ENCODE measurements at regions of chr16 and their contacts with region 1.

Region 1: GRCh38 chr16:29848420-29849297 is 14.4 kb downstream of the CDIPT start:
- DNase-seq: peak; percentile 61 to 78 (median 75)
- H3K4me3 ChIP-seq: no peak overlapping the region
- H3K27ac ChIP-seq: no peak overlapping the region
- H3K4me1 ChIP-seq: no peaks in the 10 kb centered on the region
- H3K27me3 ChIP-seq: no peaks in the 10 kb centered on the region

Region 2: GRCh38 chr16:29694384-29695195 is 154.1 kb before region 1 on chr16:
- CTCF ChIA-PET with region 1: interaction called, 11 read pairs
- POLR2A ChIA-PET with region 1: no interaction called
- DNase-seq: no peak
- H3K4me3 ChIP-seq: no peak overlapping the region
- H3K27ac ChIP-seq: no peak overlapping the region
- H3K4me1 ChIP-seq: peaks cover 0 to 9% (median 7%) of the 10 kb centered on the region in 4 experiments
- H3K27me3 ChIP-seq: no peaks in the 10 kb centered on the region

Region 3: GRCh38 chr16:29805378-29806098 is 43.1 kb before region 1 on chr16:
- CTCF ChIA-PET with region 1: interaction called, 17 read pairs
- POLR2A ChIA-PET with region 1: no interaction called
- DNase-seq: peak; percentile 98 to 100 (median 99)
- H3K4me3 ChIP-seq: peak overlapping the region; percentile 62 to 94 (median 79)
- H3K27ac ChIP-seq: peak overlapping the region; percentile 83 to 94
- H3K4me1 ChIP-seq: peaks cover 8 to 52% (median 42%) of the 10 kb centered on the region in 4 experiments
- H3K27me3 ChIP-seq: no peaks in the 10 kb centered on the region

Region 4: GRCh38 chr16:29815793-29816693 is 32.6 kb before region 1 on chr16 and contains the start of gene PAGR1:
- CTCF ChIA-PET with region 1: interaction called, 24 read pairs
- POLR2A ChIA-PET with region 1: no interaction called
- DNase-seq: peak; percentile 100
- H3K4me3 ChIP-seq: peak within 1 kb of the TSS; percentile 87 to 96 (median 90)
- H3K27ac ChIP-seq: peak within 1 kb of the TSS; percentile 33 to 75
- H3K4me1 ChIP-seq: peaks cover 7 to 70% (median 58%) of the 10 kb centered on the region in 4 experiments
- H3K27me3 ChIP-seq: peaks cover 0 to 20% (median 8%) of the 10 kb centered on the region in 5 experiments

Region 5: GRCh38 chr16:29831490-29831889 is 17.2 kb before region 1 on chr16:
- CTCF ChIA-PET with region 1: interaction called, 13 read pairs
- POLR2A ChIA-PET with region 1: no interaction called
- DNase-seq: no peak
- H3K4me3 ChIP-seq: no peak overlapping the region
- H3K27ac ChIP-seq: no peak overlapping the region
- H3K4me1 ChIP-seq: no peaks in the 10 kb centered on the region
- H3K27me3 ChIP-seq: no peaks in the 10 kb centered on the region

Measured in common myeloid progenitor, CD34-positive (primary cell).